HEK293 (cell line): ENCODE measurements at regions of chr17 and their contacts with region 1.

Region 1: DNA sequence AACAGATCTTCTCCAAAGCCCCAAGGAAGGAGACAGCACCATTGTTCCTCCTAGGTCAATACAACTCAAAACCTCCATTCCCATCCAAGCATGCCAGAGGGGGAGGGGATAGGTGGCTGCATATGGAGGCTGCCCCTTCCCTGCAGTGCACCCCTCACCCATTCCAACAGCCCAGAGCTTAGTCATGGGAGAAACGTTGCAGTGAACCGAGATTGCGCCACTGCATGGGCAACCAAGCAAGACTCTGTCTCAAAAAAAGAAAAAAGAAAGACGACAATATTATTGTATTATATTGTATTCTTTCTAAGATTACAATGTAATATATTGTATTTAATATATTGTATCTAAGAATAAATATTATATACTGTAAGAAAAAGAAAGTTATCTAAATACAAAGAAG is 36.4 kb upstream of the CD300E start:
- H3K4me3 ChIP-seq: no peak overlapping the region
- H3K27ac ChIP-seq: no peak overlapping the region
- H3K4me1 ChIP-seq: no peaks in the 10 kb centered on the region
- CTCF ChIP-seq: no peak

Region 2: GRCh38 chr17:74646231-74646630 is 13.7 kb before region 1 on chr17:
- CTCF ChIA-PET with region 1: interaction called, 21 read pairs
- POLR2A ChIA-PET with region 1: no interaction called
- H3K4me3 ChIP-seq: no peak overlapping the region
- H3K27ac ChIP-seq: no peak overlapping the region
- H3K4me1 ChIP-seq: no peaks in the 10 kb centered on the region
- CTCF ChIP-seq: no peak

Region 3: DNA sequence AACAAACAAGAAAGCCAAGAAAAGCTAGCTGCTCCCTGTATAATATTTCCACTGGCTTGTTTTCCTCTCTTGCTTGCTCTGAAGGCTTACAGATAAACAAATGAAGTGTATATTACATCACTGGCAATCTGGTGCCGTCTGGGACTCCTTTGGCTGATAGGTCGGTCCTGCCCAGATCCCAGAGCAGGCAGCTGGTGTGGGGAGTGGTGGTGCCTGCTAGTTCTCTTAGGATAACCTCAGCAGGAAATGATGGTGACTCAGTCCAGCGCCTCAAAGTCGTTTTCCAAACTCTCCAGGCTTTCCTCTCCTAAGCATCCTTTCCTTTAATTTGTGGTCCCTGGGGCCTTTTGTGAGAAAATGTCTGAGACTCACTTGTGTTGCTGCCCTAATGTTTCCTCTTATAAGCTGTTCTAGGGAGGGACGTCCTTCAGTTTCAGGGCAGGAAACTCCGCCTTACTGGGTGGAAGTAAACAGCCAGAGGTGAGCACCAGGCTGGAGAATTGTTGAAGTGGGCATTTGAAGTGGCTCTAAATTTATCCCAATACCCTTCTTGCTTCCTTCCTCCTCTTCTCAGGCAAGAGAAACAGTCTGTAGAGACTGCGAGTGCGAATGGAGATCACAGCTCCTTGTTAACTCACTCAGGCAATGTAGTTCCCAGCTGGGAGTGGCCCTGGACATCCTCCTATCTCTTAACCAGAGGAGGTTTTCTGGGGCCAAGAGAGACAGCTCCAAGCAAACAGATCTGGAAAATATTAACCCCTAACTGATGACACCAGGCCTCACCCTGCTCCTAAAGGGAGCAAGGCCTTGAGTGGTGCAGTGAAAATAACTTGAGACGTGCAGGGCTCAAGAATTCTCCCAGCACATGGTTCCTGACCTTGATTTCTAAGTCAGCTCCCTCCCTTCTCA is 17.9 kb after region 1 on chr17:
- CTCF ChIA-PET with region 1: interaction called, 36 read pairs
- POLR2A ChIA-PET with region 1: no interaction called
- H3K4me3 ChIP-seq: no peak overlapping the region
- H3K27ac ChIP-seq: no peak overlapping the region
- H3K4me1 ChIP-seq: no peaks in the 10 kb centered on the region
- CTCF ChIP-seq: no peak

Region 4: DNA sequence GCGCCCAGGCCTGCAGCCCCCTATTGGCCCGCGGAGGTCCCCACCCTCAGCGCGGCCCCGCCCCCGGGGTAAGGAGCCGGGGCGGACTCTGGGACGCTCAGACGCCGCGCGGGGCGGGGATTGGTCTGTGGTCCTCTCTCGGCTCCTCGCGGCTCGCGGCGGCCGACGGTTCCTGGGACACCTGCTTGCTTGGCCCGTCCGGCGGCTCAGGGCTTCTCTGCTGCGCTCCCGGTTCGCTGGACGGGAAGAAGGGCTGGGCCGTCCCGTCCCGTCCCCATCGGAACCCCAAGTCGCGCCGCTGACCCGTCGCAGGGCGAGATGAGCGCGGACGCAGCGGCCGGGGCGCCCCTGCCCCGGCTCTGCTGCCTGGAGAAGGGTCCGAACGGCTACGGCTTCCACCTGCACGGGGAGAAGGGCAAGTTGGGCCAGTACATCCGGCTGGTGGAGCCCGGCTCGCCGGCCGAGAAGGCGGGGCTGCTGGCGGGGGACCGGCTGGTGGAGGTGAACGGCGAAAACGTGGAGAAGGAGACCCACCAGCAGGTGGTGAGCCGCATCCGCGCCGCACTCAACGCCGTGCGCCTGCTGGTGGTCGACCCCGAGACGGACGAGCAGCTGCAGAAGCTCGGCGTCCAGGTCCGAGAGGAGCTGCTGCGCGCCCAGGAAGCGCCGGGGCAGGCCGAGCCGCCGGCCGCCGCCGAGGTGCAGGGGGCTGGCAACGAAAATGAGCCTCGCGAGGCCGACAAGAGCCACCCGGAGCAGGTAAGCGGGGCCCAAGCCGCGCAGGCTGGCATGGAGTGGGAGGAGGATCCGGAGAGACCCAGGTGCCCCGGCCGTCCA is 88.8 kb after region 1 on chr17 and contains the start of gene NHERF1:
- CTCF ChIA-PET with region 1: interaction called, 26 read pairs
- POLR2A ChIA-PET with region 1: no interaction called
- H3K4me3 ChIP-seq: peak within 1 kb of the TSS; percentile 81
- H3K27ac ChIP-seq: peak within 1 kb of the TSS; percentile 68; the same call in 1 of the 2 replicates
- H3K4me1 ChIP-seq: peaks cover 7% of the 10 kb centered on the region
- CTCF ChIP-seq: peak; percentile 100

Region 5: GRCh38 chr17:74776044-74776977 is 116.4 kb after region 1 on chr17 and contains the start of gene NAT9:
- CTCF ChIA-PET with region 1: interaction called, 13 read pairs
- POLR2A ChIA-PET with region 1: interaction called, 7 read pairs
- H3K4me3 ChIP-seq: peak within 1 kb of the TSS; percentile 84
- H3K27ac ChIP-seq: peak within 1 kb of the TSS; percentile 50
- H3K4me1 ChIP-seq: peaks cover 3% of the 10 kb centered on the region; the same call in 1 of the 2 replicates
- CTCF ChIP-seq: no peak